Left colon (tissue), 2 donors: ENCODE measurements at regions of chr15 and their contacts with region 1.

Region 1: GRCh38 chr15:75675579-75676404 is 28.1 kb downstream of the SNX33 start:
- DNase-seq: no peak
- ATAC-seq: no peak

Region 2: GRCh38 chr15:75631935-75632334 is 43.9 kb before region 1 on chr15:
- intact Hi-C with region 1: loop called in 1 of 2 experiments (anchors 5 kb)
- DNase-seq: no peak
- ATAC-seq: peak; percentile 75